Head of caudate nucleus (tissue), 42 donors: ENCODE measurements at regions of chr3 and their contacts with region 1.

Region 1: DNA sequence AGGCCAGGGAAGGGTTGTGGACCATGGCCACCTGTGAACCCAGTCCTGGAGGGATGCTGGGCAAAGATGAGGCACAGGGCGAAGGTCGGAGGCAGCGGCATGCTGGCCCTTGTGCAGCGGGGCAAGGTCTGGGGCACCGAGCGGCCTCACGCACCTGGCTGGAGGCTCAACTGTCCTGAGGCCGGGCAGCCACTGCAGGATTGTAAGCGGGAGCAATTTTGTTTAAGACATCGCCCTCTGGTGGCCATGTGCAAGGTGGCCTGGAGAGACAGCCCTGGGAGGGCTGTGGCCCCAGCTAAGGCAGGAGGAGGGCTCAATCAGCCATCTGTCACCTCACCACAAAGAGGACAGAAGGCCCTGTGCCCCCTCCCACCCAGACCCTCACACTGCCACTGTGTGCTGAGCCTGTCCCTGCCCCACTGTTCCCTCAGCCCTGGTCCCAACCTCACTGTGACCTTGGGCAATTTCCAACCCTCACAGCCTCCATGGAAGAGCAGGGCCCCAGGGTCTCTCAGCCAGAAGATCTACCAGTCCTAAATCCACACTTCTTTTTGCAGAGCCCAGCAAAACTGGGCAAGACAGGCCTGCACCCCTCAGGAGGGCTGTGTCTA is 46.2 kb downstream of the TPRA1 start:
- DNase-seq: peak; percentile 50 to 89 (median 76)

Region 2: GRCh38 chr3:126679318-126679751 is 865.0 kb before region 1 on chr3:
- intact Hi-C with region 1: loop called (anchors 10 kb)
- DNase-seq: peak; percentile 38 to 94 (median 88)

Region 3: DNA sequence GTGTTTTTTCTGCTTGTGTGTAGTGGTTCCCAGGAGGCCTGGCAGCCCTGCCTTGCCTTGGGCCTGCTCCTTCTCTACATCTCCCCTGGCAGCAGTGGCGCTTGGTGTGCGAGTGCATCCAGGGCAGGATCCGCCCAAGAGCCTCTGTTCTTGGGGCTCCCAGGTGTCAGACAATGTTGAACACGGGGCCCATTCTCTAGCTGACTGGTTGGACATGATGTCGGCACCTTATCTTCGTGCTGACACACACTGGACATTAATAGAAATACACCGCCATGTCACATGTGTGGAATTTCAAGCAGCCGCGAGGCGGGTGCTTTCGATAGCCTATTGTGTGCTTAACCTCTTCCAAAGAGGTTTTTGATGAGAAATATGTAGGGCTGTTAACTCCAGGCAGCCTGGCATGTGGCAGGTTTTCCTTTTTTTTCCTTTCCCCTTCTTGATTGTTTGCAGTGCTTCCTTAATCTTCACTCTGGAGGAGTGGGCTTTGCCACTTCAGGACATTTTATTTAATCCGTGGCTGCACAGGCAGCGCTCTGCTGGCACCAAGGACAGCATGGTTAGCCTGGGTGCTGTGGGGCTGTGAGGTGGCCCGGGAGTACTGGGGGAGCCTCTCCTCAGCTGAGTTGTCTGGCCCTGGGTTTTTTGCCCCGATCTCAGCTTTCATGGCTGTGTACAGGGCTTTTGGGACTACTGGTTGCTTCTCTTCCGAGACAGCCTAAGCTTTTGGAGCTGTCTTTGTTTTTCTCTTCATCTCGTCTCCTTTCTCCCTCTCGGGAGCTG is 797.7 kb before region 1 on chr3:
- intact Hi-C with region 1: loop called (anchors 10 kb)
- DNase-seq: no peak

Region 4: GRCh38 chr3:126971891-126972351 is 572.4 kb before region 1 on chr3:
- intact Hi-C with region 1: loop called (anchors 10 kb)
- DNase-seq: peak in 40 of 42 donors; percentile 20 to 75 (median 56)